ENCODE measurements at regions of chr19 and their contacts with region 1.

Region 1: GRCh38 chr19:54121259-54121658 is 5.7 kb downstream of the PRPF31 start:
- DNase-seq: peak; percentile 54
- H3K4me3 ChIP-seq: no peak overlapping the region
- H3K27ac ChIP-seq: no peak overlapping the region
- H3K4me1 ChIP-seq: peaks cover 5 to 9% (median 7%) of the 10 kb centered on the region in 4 donors
- H3K27me3 ChIP-seq: no peaks in the 10 kb centered on the region
- CTCF ChIP-seq: no peak
- EP300 ChIP-seq: no peak
- POLR2A ChIP-seq: no peak

Region 2: DNA sequence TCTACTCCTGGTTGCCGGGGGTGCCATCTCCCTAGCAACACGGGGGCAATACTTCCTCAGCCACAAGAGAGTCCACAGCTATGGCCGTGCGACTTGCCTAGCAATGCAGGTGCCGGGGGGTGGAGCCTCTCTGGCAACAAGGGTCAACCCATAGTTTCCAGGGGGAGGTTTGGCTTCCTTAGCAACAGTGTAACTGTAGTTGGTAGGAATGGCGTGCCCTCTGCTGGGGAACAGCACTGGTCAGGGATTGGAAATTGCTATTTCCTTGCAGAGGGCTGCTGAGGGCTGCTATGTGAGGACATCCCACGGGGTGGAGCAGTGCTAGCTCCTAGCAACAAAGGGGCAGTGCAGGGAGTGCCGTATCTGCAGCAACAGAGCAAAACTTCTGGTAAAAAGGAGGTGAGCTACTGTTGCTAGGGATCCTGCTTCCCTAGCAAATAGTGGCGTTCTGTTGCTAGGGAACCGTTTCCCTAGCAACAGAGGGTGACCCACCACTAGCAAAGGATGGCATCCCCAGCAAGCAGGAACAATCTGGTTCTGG is 58.7 kb after region 1 on chr19:
- in situ Hi-C with region 1: no loop called
- intact Hi-C with region 1: no loop called
- DNase-seq: peak; percentile 79
- H3K4me3 ChIP-seq: no peak overlapping the region
- H3K27ac ChIP-seq: peak overlapping the region in 2 of 4 donors; percentile 10 to 39
- H3K4me1 ChIP-seq: no peaks in the 10 kb centered on the region
- H3K27me3 ChIP-seq: no peaks in the 10 kb centered on the region
- CTCF ChIP-seq: peak in 4 of 5 experiments; percentile 41 to 79 (median 52)
- EP300 ChIP-seq: no peak
- POLR2A ChIP-seq: no peak

Region 3: GRCh38 chr19:54209811-54210494 is 88.7 kb after region 1 on chr19:
- in situ Hi-C with region 1: no loop called
- intact Hi-C with region 1: no loop called
- DNase-seq: peak; percentile 93
- H3K4me3 ChIP-seq: no peak overlapping the region
- H3K27ac ChIP-seq: peak overlapping the region; percentile 84 to 90 (median 84)
- H3K4me1 ChIP-seq: peaks cover 31 to 64% (median 45%) of the 10 kb centered on the region in 4 donors
- H3K27me3 ChIP-seq: no peaks in the 10 kb centered on the region
- CTCF ChIP-seq: no peak
- EP300 ChIP-seq: no peak
- POLR2A ChIP-seq: peak; percentile 34

Region 4: GRCh38 chr19:54305141-54305540 is 183.9 kb after region 1 on chr19:
- in situ Hi-C with region 1: no loop called
- intact Hi-C with region 1: no loop called
- DNase-seq: no peak
- H3K4me3 ChIP-seq: no peak overlapping the region
- H3K27ac ChIP-seq: no peak overlapping the region
- H3K4me1 ChIP-seq: no peaks in the 10 kb centered on the region
- H3K27me3 ChIP-seq: no peaks in the 10 kb centered on the region
- CTCF ChIP-seq: no peak
- EP300 ChIP-seq: no peak
- POLR2A ChIP-seq: no peak

Region 5: DNA sequence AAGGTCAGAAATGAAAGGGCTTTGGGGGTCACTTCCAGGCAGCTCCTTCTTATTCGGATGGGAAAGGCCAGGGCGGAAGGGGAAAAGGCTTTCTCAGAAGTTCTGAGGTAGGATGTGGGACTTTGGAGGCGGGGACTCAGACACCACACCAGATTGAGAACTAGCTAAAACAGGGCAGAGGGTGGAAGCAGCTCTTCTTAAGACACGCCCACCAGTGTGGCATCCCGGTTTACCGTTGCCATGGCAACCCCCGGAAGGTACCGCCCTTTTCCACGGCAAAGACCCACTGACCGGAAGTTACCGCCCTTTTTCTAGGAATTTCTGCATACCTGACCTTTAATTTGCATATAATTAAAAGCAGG is 195.5 kb after region 1 on chr19:
- in situ Hi-C with region 1: no loop called
- intact Hi-C with region 1: no loop called
- DNase-seq: no peak
- H3K4me3 ChIP-seq: no peak overlapping the region
- H3K27ac ChIP-seq: no peak overlapping the region
- H3K4me1 ChIP-seq: no peaks in the 10 kb centered on the region
- H3K27me3 ChIP-seq: no peaks in the 10 kb centered on the region
- CTCF ChIP-seq: no peak
- EP300 ChIP-seq: no peak
- POLR2A ChIP-seq: no peak

Region 6: GRCh38 chr19:55270172-55270942 is 1149.1 kb after region 1 on chr19:
- in situ Hi-C with region 1: no loop called
- intact Hi-C with region 1: loop called (anchors 5 kb)
- DNase-seq: no peak
- H3K4me3 ChIP-seq: no peak overlapping the region
- H3K27ac ChIP-seq: no peak overlapping the region
- H3K4me1 ChIP-seq: no peaks in the 10 kb centered on the region
- H3K27me3 ChIP-seq: no peaks in the 10 kb centered on the region
- CTCF ChIP-seq: no peak
- EP300 ChIP-seq: no peak
- POLR2A ChIP-seq: no peak

Measured in transverse colon (tissue), 4 donors.